Dendritic cell treated with granulocyte-macrophage colony-stimulating factor and Interleukin-4, amounts not matched to agents 40 ng/mL and 50 ng/mL, for 4 days (primary cell): ENCODE measurements at regions of chr18 and their contacts with region 1.

Region 1: DNA sequence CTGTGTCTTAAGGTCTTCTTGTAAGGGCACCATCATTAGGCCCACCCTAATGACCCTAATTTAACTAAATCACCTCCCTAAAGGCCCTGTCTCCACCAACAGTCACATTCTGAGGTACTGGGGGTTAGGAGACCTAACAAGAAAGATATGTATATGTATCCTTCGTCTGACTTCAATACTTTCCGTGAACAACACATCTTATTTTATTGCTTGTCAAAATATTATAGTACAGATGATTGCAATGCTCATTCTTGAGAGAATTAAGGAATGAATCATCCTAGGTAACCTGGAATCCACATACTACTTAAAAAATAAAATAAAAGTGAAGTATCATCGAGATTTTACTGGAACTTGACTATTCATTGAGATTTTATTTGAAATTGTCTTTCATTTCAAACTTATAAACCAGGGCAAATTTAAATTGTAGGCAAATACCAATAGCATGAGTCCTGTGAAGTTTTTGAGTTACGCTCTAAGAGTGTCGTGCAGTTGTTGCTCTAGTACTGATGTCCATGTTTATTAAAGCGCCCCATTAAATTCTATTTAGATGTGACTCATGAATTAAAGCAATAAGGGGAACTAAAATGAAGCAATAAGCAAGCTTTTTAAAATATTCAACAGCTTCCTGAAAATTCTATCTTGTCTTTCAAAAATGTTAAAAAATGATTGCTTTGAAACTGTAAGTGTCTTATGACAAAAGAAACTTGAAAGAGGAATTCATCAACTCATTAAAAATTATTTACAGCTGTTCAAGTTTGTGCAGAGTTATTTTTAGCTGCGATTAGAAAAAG is 40.0 kb downstream of the CCDC102B start:
- H3K4me3 Mint-ChIP-seq: peak overlapping the region; percentile 20
- H3K27ac Mint-ChIP-seq: peak overlapping the region; percentile 71
- H3K4me1 Mint-ChIP-seq: peaks cover 42% of the 10 kb centered on the region
- H3K27me3 Mint-ChIP-seq: no peaks in the 10 kb centered on the region

Region 2: GRCh38 chr18:69196336-69196735 is 358.5 kb after region 1 on chr18:
- intact Hi-C with region 1: no loop called
- H3K4me3 Mint-ChIP-seq: no peak overlapping the region
- H3K27ac Mint-ChIP-seq: no peak overlapping the region
- H3K4me1 Mint-ChIP-seq: no peaks in the 10 kb centered on the region
- H3K27me3 Mint-ChIP-seq: no peaks in the 10 kb centered on the region

Region 3: DNA sequence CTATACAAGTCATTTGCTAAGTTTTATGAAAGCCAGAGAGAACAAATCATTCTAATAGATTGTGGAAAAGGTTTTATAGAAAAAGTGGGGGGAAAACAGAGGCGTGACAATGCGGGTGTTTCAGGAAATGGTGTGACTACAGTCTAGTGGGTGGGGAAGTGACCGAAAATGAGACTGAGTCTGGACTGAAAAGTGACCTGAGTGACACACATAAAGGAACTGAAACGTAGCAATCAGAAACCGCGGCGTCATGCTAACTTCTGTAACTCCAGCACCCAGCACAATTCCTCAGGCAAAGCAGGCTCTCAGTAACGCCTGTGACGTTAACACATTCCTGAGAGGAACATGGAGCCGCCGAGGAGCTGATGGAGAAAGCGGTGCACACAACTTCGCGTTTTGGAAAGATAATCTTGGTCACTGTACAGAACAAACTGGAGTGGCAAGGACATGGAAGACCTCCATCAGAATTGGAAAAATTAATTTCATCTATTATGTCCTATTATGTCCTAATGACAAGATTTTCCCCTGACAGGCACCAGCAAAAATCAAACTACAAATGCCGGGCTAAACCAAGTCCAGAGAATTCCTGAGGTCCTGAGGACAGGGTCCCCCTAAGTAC is 1111.2 kb after region 1 on chr18:
- intact Hi-C with region 1: loop called (anchors 10 kb)
- H3K4me3 Mint-ChIP-seq: no peak overlapping the region
- H3K27ac Mint-ChIP-seq: no peak overlapping the region
- H3K4me1 Mint-ChIP-seq: peaks cover 32% of the 10 kb centered on the region
- H3K27me3 Mint-ChIP-seq: no peaks in the 10 kb centered on the region